Left cardiac atrium (tissue), 4 donors: ENCODE measurements at regions of chr6 and their contacts with region 1.

Region 1: GRCh38 chr6:121055572-121056163 is 278.6 kb downstream of the TBC1D32 start:
- DNase-seq: no peak
- ATAC-seq: peak; percentile 61 to 64

Region 2: GRCh38 chr6:121305957-121306607 is 250.4 kb after region 1 on chr6:
- intact Hi-C with region 1: loop called in 1 of 2 experiments (anchors 2 kb)
- DNase-seq: no peak
- ATAC-seq: no peak

Region 3: DNA sequence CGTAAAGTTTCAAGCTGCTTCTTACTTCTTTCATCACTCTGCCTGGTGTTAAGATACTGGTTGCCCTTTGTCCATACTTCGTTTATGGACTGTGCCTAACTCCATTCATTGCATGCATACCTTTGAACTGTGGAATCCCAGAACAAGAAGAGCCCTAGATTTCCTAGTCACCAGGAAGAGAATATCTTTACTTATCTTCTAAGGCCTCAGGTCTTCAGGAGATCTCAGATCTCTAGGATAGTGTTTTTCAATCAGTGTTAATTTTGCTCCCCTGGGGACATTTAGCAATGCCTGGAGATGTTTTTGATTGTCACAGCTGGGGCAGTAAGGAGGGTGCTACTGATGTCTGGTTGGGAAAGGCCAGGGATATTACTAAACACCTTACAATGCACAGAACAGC is 344.3 kb after region 1 on chr6:
- intact Hi-C with region 1: loop called in 1 of 2 experiments (anchors 10 kb)
- DNase-seq: no peak
- ATAC-seq: no peak